ENCODE measurements at regions of chr5 and their contacts with region 1.

Region 1: GRCh38 chr5:92309336-92309991 is 926.3 kb upstream of the ARRDC3 start:
- DNase-seq: peak; percentile 1
- H3K4me3 ChIP-seq: no peak overlapping the region
- H3K27ac ChIP-seq: no peak overlapping the region
- H3K4me1 ChIP-seq: no peaks in the 10 kb centered on the region
- H3K27me3 ChIP-seq: no peaks in the 10 kb centered on the region
- CTCF ChIP-seq: peak; percentile 28 to 55

Region 2: GRCh38 chr5:91742550-91742949 is 566.9 kb before region 1 on chr5:
- CTCF ChIA-PET with region 1: no interaction called
- dilution Hi-C with region 1: no loop called
- in situ Hi-C with region 1: no loop called
- intact Hi-C with region 1: no loop called
- DNase-seq: no peak
- H3K4me3 ChIP-seq: no peak overlapping the region
- H3K27ac ChIP-seq: no peak overlapping the region
- H3K4me1 ChIP-seq: no peaks in the 10 kb centered on the region
- H3K27me3 ChIP-seq: no peaks in the 10 kb centered on the region
- CTCF ChIP-seq: no peak

Region 3: GRCh38 chr5:91928754-91929521 is 380.5 kb before region 1 on chr5:
- CTCF ChIA-PET with region 1: no interaction called
- dilution Hi-C with region 1: no loop called
- in situ Hi-C with region 1: no loop called
- intact Hi-C with region 1: loop called (anchors 5 kb)
- DNase-seq: no peak
- H3K4me3 ChIP-seq: no peak overlapping the region
- H3K27ac ChIP-seq: no peak overlapping the region
- H3K4me1 ChIP-seq: no peaks in the 10 kb centered on the region
- H3K27me3 ChIP-seq: no peaks in the 10 kb centered on the region
- CTCF ChIP-seq: peak; percentile 48 to 60

Region 4: GRCh38 chr5:92207151-92207550 is 102.3 kb before region 1 on chr5:
- CTCF ChIA-PET with region 1: no interaction called
- dilution Hi-C with region 1: no loop called
- in situ Hi-C with region 1: no loop called
- intact Hi-C with region 1: no loop called
- DNase-seq: no peak
- H3K4me3 ChIP-seq: no peak overlapping the region
- H3K27ac ChIP-seq: no peak overlapping the region
- H3K4me1 ChIP-seq: no peaks in the 10 kb centered on the region
- H3K27me3 ChIP-seq: no peaks in the 10 kb centered on the region
- CTCF ChIP-seq: no peak

Region 5: GRCh38 chr5:92378966-92379611 is 69.6 kb after region 1 on chr5:
- CTCF ChIA-PET with region 1: no interaction called
- dilution Hi-C with region 1: no loop called
- in situ Hi-C with region 1: no loop called
- intact Hi-C with region 1: no loop called
- DNase-seq: peak; percentile 13
- H3K4me3 ChIP-seq: no peak overlapping the region
- H3K27ac ChIP-seq: no peak overlapping the region
- H3K4me1 ChIP-seq: no peaks in the 10 kb centered on the region
- H3K27me3 ChIP-seq: no peaks in the 10 kb centered on the region
- CTCF ChIP-seq: no peak

Region 6: DNA sequence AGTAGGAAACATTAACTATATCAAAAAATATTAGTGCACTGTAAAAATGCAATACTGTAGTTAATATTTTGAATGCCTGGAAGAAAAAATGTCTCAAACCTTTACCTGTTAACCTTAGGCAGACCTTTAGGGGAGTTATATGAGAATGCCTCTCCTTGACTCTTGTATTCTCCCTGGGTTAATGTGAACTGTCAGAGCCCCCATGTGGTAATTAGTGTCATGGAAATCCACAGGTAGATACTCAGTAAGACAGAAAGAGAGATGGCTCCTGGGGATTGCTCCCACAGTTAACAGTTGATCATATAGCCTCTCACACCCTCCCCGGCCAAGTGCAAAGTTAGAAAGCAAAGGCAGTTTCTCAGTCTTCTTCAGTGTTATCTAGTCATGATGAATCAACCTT is 528.8 kb after region 1 on chr5:
- CTCF ChIA-PET with region 1: no interaction called
- dilution Hi-C with region 1: no loop called
- in situ Hi-C with region 1: loop called in 1 of 2 experiments (anchors 25 kb)
- intact Hi-C with region 1: loop called (anchors 1 kb)
- DNase-seq: peak; percentile 40
- H3K4me3 ChIP-seq: no peak overlapping the region
- H3K27ac ChIP-seq: no peak overlapping the region
- H3K4me1 ChIP-seq: no peaks in the 10 kb centered on the region
- H3K27me3 ChIP-seq: peaks cover 2% of the 10 kb centered on the region
- CTCF ChIP-seq: peak in 1 of 2 donors; percentile 52

Region 7: GRCh38 chr5:93062548-93062947 is 753.1 kb after region 1 on chr5:
- CTCF ChIA-PET with region 1: no interaction called
- dilution Hi-C with region 1: no loop called
- in situ Hi-C with region 1: no loop called
- intact Hi-C with region 1: loop called (anchors 10 kb)
- DNase-seq: no peak
- H3K4me3 ChIP-seq: no peak overlapping the region
- H3K27ac ChIP-seq: no peak overlapping the region
- H3K4me1 ChIP-seq: peaks cover 2% of the 10 kb centered on the region
- H3K27me3 ChIP-seq: no peaks in the 10 kb centered on the region
- CTCF ChIP-seq: peak; percentile 37 to 50

Measured in mammary epithelial cell (primary cell).